ENCODE measurements at regions of chr13 and their contacts with region 1.

Region 1: DNA sequence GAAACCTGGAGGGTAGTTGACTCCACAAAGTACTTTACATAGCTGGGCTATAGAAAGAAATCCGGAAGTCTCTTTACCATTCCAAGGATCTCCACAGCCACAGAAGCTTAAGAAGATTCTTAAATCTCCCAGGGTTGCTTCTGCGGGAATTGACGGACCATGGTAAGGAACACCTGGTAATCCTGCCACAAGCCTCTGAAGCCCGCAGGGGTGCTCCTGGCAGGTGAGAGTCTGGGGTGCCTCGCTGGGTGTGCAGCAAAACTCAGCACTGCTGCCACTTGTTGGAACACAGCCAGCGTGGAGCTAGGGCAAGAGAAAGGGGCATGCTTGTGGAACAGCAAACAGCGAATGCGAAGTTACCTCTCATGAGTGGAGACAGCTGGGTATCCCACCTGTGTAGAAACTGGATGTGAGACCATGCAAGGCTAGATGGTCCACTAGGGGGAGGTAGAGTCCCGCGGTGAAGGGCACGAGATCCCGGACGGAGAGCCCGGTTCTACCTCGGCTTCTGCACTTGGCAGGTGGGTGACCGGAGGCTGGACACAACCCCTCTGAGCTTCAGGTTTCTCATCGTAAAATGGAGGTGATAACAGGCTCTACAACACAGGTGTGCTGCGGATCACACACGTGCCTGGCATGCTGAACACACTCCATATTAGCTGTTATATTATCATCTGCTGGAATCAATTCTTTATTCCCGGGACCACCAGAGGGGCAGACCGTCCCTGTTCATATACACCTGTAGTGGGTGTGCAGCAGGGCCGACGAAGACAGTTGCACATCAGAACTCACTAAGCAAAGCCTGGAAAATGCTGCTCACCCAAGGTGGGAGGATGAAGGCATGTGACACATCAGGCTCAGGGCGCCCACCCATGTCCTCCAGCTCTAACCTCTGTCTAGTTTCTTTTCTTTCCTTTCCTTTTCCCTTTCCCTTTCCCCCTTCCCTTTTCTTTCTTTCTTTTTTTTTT is 24.1 kb upstream of the UBAC2 start:
- DNase-seq: peak; percentile 49 to 75 (median 73)
- H3K4me3 ChIP-seq: no peak overlapping the region
- H3K27ac ChIP-seq: no peak overlapping the region
- H3K4me1 ChIP-seq: no peaks in the 10 kb centered on the region
- H3K27me3 ChIP-seq: no peaks in the 10 kb centered on the region
- CTCF ChIP-seq: peak; percentile 64 to 71 (median 67)
- EP300 ChIP-seq: no peak
- POLR2A ChIP-seq: no peak

Region 2: DNA sequence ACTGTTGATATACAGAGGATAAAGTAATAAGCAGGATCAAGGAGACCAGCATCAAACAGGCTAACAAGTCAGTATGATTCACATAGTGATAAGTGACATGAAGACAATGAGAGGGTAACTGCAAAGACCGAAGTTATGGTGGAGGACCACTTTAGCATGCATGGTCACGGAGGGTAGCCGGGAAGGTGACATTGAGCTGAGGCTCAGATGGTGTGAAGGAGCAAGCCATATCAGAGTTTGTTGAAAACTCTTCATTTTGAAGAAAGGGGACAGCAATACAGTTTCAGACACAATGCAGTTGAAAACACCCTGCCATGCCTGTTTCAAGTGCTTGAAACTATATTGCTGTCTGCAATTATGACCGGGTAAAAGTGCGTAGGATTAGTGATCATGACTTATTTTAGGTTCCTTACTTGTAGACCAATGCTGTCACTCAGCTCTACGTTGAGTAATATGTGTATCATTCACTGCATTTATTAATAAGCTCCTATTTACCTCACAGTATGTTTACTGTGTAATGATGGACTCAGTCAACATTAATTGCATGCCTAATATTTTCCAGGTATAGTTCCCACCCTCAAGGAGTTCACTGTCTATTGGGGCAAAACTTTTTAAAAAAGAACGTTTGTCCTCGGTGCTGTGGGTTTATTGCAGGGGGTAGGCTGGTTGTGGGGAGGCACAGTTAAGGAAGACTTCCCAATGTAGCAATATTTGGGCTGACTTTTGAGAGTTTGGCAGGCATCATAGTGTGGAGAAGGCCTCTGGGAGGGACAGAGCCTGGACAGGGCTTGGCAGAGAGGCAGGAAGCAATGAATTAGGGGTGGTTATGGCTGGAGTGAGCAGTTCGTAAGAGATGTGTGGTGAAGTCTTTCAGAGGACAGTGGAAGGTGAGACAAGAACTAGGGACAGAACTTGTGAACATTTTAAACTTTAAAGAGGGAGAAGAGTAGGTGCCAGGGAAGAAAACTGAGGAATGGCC is 27.3 kb after region 1 on chr13:
- intact Hi-C with region 1: loop called in 1 of 4 experiments (anchors 1 kb)
- DNase-seq: no peak
- H3K4me3 ChIP-seq: no peak overlapping the region
- H3K27ac ChIP-seq: no peak overlapping the region
- H3K4me1 ChIP-seq: peaks cover 1% of the 10 kb centered on the region
- H3K27me3 ChIP-seq: no peaks in the 10 kb centered on the region
- CTCF ChIP-seq: no peak
- EP300 ChIP-seq: no peak
- POLR2A ChIP-seq: no peak

Region 3: DNA sequence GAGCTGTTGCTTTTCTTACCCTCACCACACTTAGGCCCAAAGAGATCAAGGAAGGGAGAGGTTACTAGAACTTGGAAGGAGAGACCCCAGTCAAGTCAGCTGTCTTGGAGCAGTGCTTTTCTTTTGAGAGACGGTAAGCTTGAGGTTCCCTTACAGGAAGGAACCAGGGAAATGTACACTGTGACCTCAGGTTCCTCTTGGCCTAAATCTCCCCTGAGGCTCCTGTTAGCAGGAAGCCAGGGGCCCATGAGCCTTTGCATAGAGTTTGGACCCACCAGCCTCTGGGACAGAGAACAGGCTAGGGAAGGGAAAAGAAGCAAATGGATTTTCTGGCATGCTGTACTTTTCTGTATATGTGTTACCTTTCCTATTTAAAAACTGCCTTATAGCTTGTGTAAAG is 87.5 kb after region 1 on chr13:
- intact Hi-C with region 1: loop called in 3 of 4 experiments (anchors 5 to 10 kb)
- DNase-seq: no peak
- H3K4me3 ChIP-seq: no peak overlapping the region
- H3K27ac ChIP-seq: no peak overlapping the region
- H3K4me1 ChIP-seq: no peaks in the 10 kb centered on the region
- H3K27me3 ChIP-seq: no peaks in the 10 kb centered on the region
- CTCF ChIP-seq: no peak
- EP300 ChIP-seq: no peak
- POLR2A ChIP-seq: no peak

Region 4: GRCh38 chr13:99269627-99270241 is 93.1 kb after region 1 on chr13:
- intact Hi-C with region 1: loop called in 3 of 4 experiments (anchors 5 to 10 kb)
- DNase-seq: peak in 1 of 5 donors; percentile 30
- H3K4me3 ChIP-seq: no peak overlapping the region
- H3K27ac ChIP-seq: no peak overlapping the region
- H3K4me1 ChIP-seq: no peaks in the 10 kb centered on the region
- H3K27me3 ChIP-seq: no peaks in the 10 kb centered on the region
- CTCF ChIP-seq: peak; percentile 20 to 86 (median 71)
- EP300 ChIP-seq: no peak
- POLR2A ChIP-seq: no peak

Region 5: GRCh38 chr13:99436686-99437416 is 260.3 kb after region 1 on chr13:
- intact Hi-C with region 1: loop called (anchors 5 to 10 kb)
- DNase-seq: peak; percentile 78 to 91 (median 87)
- H3K4me3 ChIP-seq: no peak overlapping the region
- H3K27ac ChIP-seq: no peak overlapping the region
- H3K4me1 ChIP-seq: peaks cover 9% of the 10 kb centered on the region
- H3K27me3 ChIP-seq: no peaks in the 10 kb centered on the region
- CTCF ChIP-seq: peak; percentile 99
- EP300 ChIP-seq: no peak
- POLR2A ChIP-seq: no peak

Region 6: GRCh38 chr13:100214886-100215285 is 1038.3 kb after region 1 on chr13:
- intact Hi-C with region 1: no loop called
- DNase-seq: no peak
- H3K4me3 ChIP-seq: no peak overlapping the region
- H3K27ac ChIP-seq: no peak overlapping the region
- H3K4me1 ChIP-seq: no peaks in the 10 kb centered on the region
- H3K27me3 ChIP-seq: no peaks in the 10 kb centered on the region
- CTCF ChIP-seq: no peak
- EP300 ChIP-seq: no peak
- POLR2A ChIP-seq: no peak

Measured in ovary (tissue), 10 donors.